ENCODE measurements at regions of chr15 and their contacts with region 1.

Region 1: GRCh38 chr15:65384895-65385858 is 7.4 kb upstream of the IGDCC3 start:
- DNase-seq: peak; percentile 96
- ATAC-seq: peak; percentile 86
- H3K4me3 Mint-ChIP-seq: peak overlapping the region; percentile 60
- H3K27ac Mint-ChIP-seq: no peak overlapping the region
- H3K4me1 Mint-ChIP-seq: peaks cover 24% of the 10 kb centered on the region
- H3K27me3 Mint-ChIP-seq: peaks cover 3% of the 10 kb centered on the region; the same call in 1 of the 2 replicates
- CTCF ChIP-seq: peak; percentile 75

Region 2: DNA sequence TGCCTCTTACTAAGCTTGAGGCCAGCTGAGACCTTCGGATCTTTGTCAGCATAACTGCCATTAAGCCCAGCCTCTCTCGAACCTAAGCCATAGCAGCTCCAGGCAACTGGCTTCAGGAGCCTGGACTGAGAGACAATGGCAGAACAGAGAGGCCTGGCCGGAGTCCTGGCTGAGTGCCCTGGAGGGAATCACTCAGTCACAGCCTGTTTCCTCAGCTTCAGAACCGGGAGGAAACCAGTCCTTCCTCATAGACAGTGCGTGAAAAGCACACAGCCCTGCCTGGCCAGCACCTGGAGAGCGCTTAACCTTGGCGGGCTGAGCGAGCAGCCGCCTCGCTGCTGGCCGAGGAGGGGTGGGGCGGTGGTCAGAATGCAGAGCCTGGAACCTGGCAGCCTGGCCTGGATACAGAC is 59.1 kb before region 1 on chr15:
- CTCF ChIA-PET with region 1: interaction called, 175 read pairs
- POLR2A ChIA-PET with region 1: no interaction called
- DNase-seq: peak; percentile 52
- ATAC-seq: peak; percentile 55
- H3K4me3 Mint-ChIP-seq: no peak overlapping the region
- H3K27ac Mint-ChIP-seq: peak overlapping the region; percentile 70
- H3K4me1 Mint-ChIP-seq: peaks cover 9% of the 10 kb centered on the region
- H3K27me3 Mint-ChIP-seq: no peaks in the 10 kb centered on the region; the same call in 1 of the 2 replicates
- CTCF ChIP-seq: no peak

Region 3: DNA sequence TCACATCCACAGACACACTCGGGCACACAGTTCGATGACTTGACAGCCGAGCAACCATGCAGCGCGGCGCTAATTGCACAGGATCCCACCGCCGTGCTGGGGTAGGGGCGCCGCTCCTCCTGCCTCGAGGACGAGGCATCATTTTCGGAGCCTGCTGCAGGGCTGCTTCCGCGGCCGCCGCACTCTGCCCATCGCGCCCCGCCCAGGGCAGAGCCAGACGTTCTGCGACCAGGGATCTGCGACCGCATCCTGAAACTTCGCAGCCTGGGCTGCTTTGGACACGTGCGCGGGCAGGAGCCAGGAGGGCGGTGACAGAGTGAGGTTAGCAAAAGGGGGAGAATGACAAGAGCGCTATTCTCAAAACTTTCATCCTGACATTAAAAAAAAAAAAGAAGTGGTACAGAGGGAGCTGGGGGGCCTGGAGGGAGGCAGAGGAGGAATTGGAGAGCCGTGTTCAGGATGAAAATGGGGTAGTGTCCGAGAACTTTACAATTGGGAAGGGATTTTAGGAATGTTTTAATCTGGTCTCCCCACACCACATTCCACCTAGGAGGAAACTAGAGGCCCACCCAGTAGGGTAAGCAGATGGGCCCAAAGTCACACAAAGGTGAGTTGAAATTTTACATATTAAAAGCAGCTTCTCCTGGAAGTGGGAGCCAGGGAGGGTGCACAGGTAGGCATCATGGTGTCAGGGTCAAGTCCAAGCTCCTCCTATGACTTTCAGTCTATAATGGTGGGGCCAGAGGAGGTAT is 23.3 kb before region 1 on chr15:
- CTCF ChIA-PET with region 1: interaction called, 39 read pairs
- POLR2A ChIA-PET with region 1: no interaction called
- DNase-seq: peak; percentile 48
- ATAC-seq: peak; percentile 60
- H3K4me3 Mint-ChIP-seq: peak overlapping the region; percentile 40
- H3K27ac Mint-ChIP-seq: peak overlapping the region; percentile 8; the same call in 1 of the 2 replicates
- H3K4me1 Mint-ChIP-seq: peaks cover 60% of the 10 kb centered on the region
- H3K27me3 Mint-ChIP-seq: peaks cover 20% of the 10 kb centered on the region
- CTCF ChIP-seq: no peak

Region 4: DNA sequence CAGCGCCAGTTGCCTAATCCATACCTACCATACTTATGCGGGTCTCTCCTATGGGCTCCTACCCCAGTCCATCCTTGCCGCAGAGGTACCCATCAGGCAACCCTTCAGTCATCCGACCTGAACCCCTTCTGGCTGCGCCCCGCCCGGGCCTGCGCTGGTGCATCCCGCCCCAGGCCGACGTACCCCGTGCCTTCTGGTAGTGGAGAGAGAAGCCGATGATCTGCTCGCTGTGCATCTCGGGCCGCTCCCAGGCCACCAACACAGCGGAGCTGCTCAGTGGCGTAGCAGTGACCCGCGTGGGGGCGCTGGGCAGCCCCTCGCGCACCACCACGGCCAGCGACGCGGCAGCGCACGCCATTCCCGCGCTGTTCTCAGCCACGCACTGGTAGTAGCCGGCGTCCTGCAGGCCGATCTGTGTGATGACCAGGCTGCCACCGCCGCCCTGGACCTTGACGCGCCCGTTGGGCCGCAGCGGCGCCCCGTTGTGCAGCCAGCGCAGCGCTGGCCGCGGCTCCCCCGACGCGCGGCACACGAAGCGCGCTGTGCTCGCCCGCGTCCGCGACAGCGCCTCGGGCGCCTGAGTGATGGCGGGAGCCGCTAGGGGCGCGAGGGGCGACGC is 10.5 kb after region 1 on chr15:
- CTCF ChIA-PET with region 1: interaction called, 23 read pairs
- POLR2A ChIA-PET with region 1: no interaction called
- DNase-seq: peak; percentile 43
- ATAC-seq: peak; percentile 24
- H3K4me3 Mint-ChIP-seq: peak overlapping the region; percentile 35
- H3K27ac Mint-ChIP-seq: no peak overlapping the region
- H3K4me1 Mint-ChIP-seq: peaks cover 14% of the 10 kb centered on the region
- H3K27me3 Mint-ChIP-seq: peaks cover 43% of the 10 kb centered on the region
- CTCF ChIP-seq: no peak

Region 5: GRCh38 chr15:65434201-65434600 is 49.0 kb after region 1 on chr15:
- CTCF ChIA-PET with region 1: interaction called, 11 read pairs
- POLR2A ChIA-PET with region 1: no interaction called
- DNase-seq: no peak
- ATAC-seq: no peak
- H3K4me3 Mint-ChIP-seq: no peak overlapping the region
- H3K27ac Mint-ChIP-seq: no peak overlapping the region
- H3K4me1 Mint-ChIP-seq: no peaks in the 10 kb centered on the region
- H3K27me3 Mint-ChIP-seq: no peaks in the 10 kb centered on the region
- CTCF ChIP-seq: no peak

Measured in WTC11 (cell line).